A549 (cell line): ENCODE measurements at regions of chr22 and their contacts with region 1.

Region 1: DNA sequence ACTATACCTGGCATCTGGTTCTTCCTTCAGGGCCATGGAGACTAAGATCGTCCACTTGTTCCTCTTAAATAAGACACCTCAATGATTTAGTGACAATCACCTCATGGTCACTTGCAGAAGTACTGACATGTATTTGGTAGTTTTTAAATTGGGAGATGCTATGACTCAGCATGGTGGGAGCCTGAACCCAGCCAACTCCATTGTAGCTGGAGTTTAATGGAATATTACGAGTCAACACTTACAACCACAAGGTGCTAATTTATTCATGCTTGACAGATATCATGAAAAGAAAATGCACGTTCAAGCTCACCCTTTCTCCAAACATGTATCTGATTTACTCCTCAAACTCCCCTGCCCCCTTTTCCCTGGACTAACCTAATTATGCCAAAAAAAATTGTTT is 16.6 kb upstream of the APOL3 start:
- DNase-seq: no peak
- ATAC-seq: no peak
- H3K4me3 ChIP-seq: no peak overlapping the region
- H3K27ac ChIP-seq: no peak overlapping the region
- H3K4me1 ChIP-seq: no peaks in the 10 kb centered on the region
- CTCF ChIP-seq: no peak
- EP300 ChIP-seq: no peak
- POLR2A ChIP-seq: no peak
- RAD21 ChIP-seq: no peak

Region 2: DNA sequence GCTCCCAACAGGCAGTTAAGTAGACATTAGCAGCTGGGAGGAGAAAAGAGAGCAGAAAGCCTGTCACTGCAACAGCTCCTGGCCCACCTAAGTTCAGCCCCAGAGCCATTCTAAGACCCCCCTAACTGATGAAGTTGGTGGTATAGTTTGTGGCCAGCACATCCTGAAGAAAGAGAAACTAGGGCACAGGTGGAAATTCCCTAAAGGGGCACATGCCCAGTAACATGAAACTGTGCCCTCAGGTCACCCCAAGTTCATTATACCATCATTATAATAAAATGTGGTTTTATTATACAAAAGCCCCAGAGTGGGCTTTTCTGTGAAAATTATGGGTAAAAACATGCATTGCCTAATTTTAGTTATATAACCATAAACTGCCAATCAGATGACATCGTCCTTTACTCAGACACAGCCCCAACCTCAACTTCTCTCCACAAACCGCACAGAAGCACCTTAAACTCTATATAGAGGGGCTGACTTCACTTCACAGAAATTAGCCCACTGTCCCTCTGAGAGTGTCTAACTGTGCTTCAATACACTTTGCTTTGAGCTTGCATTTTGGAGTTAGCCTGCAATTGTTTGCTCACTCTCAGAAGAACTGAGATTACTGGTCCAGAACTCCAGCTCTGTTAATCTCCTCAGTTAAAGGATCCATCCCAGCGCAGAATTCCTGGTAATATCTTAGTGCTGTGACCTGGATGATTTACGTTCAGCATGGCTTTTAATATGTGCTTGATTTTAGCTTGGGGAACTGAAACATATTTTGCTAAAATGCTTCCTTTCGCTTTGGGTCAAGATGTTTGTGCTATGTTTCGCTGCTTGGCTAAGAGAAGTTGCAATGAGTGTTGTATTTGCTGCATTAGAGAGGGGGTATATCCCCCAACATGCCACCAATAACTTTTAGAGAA is 14.8 kb before region 1 on chr22:
- CTCF ChIA-PET with region 1: interaction called, 10 read pairs
- POLR2A ChIA-PET with region 1: no interaction called
- DNase-seq: no peak
- ATAC-seq: no peak
- H3K4me3 ChIP-seq: no peak overlapping the region
- H3K27ac ChIP-seq: no peak overlapping the region
- H3K4me1 ChIP-seq: no peaks in the 10 kb centered on the region
- CTCF ChIP-seq: no peak
- EP300 ChIP-seq: no peak
- POLR2A ChIP-seq: no peak
- RAD21 ChIP-seq: no peak